ENCODE measurements at regions of chr15 and their contacts with region 1.

Region 1: DNA sequence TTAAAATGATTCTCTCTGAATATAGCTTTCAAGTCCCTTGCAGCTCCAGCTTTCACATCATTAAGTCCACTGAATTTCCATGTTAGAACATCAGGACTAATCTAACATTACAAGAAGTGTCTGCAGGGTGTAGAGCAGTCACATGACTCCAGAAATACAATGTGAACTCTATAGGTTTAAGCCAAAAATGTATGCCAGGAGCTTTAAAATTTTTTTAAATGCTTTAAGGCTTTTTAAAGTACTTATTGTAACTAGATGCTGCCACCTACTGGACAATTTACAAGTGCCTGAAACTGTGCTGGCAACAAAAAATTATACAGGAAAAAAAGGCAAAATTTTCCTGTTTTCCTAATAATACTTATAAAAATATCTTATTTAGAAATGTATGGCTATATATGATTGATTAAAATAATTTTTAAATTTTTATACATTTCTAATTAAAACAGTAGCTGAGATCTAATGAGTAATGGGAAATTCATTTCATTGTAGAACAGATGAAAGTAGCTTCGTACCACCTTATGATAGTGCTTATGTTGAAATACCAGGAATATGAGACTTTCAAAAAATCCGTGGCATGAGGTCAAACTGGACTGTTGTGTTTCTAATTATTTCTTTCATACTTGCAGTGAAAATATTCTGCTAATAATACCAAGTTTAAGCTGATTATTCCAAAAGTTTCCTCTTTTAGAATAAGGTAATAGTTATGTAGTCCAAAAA is 25.7 kb downstream of the FSIP1 start:
- DNase-seq: no peak
- H3K4me3 ChIP-seq: peak overlapping the region in 1 of 2 experiments; percentile 33; a peak in 1 of 4 replicates
- H3K27ac ChIP-seq: no peak overlapping the region
- H3K4me1 ChIP-seq: no peaks in the 10 kb centered on the region; a peak in 1 of 4 replicates
- H3K27me3 ChIP-seq: no peaks in the 10 kb centered on the region
- CTCF ChIP-seq: peak; percentile 81
- EP300 ChIP-seq: no peak
- RAD21 ChIP-seq: peak; percentile 78

Region 2: DNA sequence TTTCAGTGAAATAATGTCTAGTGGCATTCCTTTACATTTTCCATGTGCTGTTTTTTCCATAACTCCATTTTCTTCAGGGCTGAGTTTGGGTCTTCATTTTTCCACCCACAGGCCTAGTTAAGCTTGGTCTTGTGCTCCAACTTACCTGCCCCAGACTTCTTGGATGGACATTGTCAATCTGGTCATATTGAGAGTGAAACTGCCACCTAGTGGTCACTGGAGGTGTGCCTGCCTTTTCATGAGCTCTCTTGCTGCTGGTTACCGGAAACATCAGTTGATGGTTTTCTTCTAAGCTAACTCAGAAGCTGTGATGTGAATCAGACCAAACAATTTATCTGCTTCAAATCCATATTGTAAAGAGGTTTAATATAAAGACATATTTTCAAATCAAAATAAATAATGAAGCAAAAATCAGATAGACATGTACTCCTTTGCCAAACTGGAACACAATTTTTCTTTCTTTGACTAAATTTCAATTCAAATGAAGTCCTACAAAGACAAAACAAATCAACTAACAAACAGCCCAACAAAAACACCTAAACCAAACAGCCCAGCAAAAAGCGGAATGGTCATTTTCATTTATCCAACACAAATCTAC is 1057.2 kb before region 1 on chr15:
- CTCF ChIA-PET with region 1: interaction called, 81 read pairs
- POLR2A ChIA-PET with region 1: no interaction called
- DNase-seq: peak; percentile 39
- H3K4me3 ChIP-seq: peak overlapping the region in 1 of 2 experiments; percentile 5; a peak in 1 of 4 replicates
- H3K27ac ChIP-seq: no peak overlapping the region
- H3K4me1 ChIP-seq: peaks cover 0 to 38% of the 10 kb centered on the region in 2 experiments; a peak in 2 of 4 replicates
- H3K27me3 ChIP-seq: no peaks in the 10 kb centered on the region
- CTCF ChIP-seq: peak; percentile 91
- EP300 ChIP-seq: no peak
- RAD21 ChIP-seq: peak; percentile 66

Region 3: DNA sequence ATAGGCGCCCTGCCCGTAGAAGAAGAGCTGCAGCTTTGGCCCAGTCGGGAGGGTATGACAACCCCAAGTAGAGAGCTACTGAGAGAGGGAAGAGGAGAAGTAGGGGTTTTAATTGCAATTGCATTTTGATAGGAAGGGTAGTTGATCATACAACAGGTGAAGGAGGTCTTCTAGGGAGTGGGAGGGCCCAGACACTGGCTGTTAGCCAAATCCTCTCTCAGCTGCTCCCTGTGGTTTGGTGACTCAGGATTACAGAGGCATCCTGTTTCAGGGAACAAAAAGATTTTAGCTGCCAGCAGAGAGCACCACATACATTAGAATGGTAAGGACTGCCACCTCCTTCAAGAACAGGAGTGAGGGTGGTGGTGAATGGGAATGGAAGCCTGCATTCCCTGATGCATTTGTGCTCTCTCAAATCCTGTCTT is 585.0 kb before region 1 on chr15:
- CTCF ChIA-PET with region 1: interaction called, 20 read pairs
- POLR2A ChIA-PET with region 1: no interaction called
- DNase-seq: peak; percentile 31
- H3K4me3 ChIP-seq: no peak overlapping the region
- H3K27ac ChIP-seq: peak overlapping the region; percentile 58 to 78; a peak in 3 of 4 replicates
- H3K4me1 ChIP-seq: peaks cover 7 to 8% of the 10 kb centered on the region in 2 experiments
- H3K27me3 ChIP-seq: no peaks in the 10 kb centered on the region
- CTCF ChIP-seq: peak; percentile 73
- EP300 ChIP-seq: peak in 1 of 2 experiments; percentile 77; a peak in 1 of 4 replicates
- RAD21 ChIP-seq: peak; percentile 87

Region 4: GRCh38 chr15:39666677-39667076 is 90.3 kb before region 1 on chr15:
- CTCF ChIA-PET with region 1: interaction called, 21 read pairs
- POLR2A ChIA-PET with region 1: no interaction called
- DNase-seq: no peak
- H3K4me3 ChIP-seq: no peak overlapping the region
- H3K27ac ChIP-seq: peak overlapping the region; percentile 53 to 68; a peak in 3 of 4 replicates
- H3K4me1 ChIP-seq: peaks cover 4 to 19% of the 10 kb centered on the region in 2 experiments
- H3K27me3 ChIP-seq: no peaks in the 10 kb centered on the region
- CTCF ChIP-seq: no peak
- EP300 ChIP-seq: no peak
- RAD21 ChIP-seq: no peak

Region 5: DNA sequence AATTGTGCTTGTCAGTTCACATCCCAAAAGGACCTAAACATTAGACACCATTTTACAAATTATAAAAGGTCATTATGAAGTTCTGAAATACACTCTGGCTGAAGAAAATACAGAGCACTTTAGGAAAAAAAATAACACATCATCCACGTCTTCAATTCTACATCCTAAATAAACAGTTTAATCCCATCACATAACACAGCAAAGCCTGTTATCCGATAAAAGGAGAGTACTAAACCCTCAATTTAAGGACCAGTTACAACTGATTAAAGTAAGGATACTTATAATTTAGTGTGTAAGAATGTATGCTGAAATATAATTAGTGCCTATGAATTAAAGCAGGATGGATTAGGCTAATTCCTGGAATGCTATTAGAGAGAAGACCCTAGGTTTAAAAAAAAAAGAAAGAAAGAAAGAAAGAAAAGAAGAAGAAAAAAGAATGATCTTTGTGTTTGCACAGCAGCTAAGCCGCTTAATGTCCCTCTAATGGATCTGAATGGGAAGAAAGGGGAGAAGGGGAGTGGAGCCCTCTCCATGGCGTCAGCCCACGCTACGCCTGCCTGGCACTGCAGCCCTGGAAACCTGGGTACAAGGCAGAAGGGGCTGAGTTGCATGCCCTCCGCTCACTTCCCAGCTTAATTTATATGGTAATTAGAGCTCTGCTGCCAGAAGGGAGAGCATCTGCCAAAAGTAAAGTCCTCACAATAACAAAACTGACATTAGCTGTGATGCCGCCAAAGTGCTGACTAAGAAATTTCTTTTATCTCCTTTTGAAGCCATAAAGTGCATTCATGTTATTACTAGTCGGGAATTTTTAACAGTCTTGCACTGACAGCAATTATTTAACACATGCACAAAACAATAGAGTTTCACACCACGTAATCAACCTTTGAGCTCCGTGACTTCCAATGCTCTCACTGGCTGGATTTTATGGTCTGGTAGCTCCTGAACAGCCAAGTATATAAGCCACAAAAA is 64.3 kb before region 1 on chr15:
- CTCF ChIA-PET with region 1: interaction called, 139 read pairs
- POLR2A ChIA-PET with region 1: no interaction called
- DNase-seq: peak; percentile 7
- H3K4me3 ChIP-seq: no peak overlapping the region
- H3K27ac ChIP-seq: no peak overlapping the region
- H3K4me1 ChIP-seq: peaks cover 2 to 6% of the 10 kb centered on the region in 2 experiments; a peak in 1 of 4 replicates
- H3K27me3 ChIP-seq: no peaks in the 10 kb centered on the region
- CTCF ChIP-seq: no peak
- EP300 ChIP-seq: no peak
- RAD21 ChIP-seq: no peak

Region 6: GRCh38 chr15:39720621-39721611 is 36.0 kb before region 1 on chr15:
- CTCF ChIA-PET with region 1: interaction called, 20 read pairs
- POLR2A ChIA-PET with region 1: no interaction called
- DNase-seq: no peak
- H3K4me3 ChIP-seq: no peak overlapping the region; a peak in 1 of 4 replicates
- H3K27ac ChIP-seq: peak overlapping the region; percentile 86 to 89; a peak in 3 of 4 replicates
- H3K4me1 ChIP-seq: peaks cover 13% of the 10 kb centered on the region in 2 experiments
- H3K27me3 ChIP-seq: no peaks in the 10 kb centered on the region
- CTCF ChIP-seq: no peak
- EP300 ChIP-seq: peak in 1 of 2 experiments; percentile 56; a peak in 2 of 4 replicates
- RAD21 ChIP-seq: no peak

Region 7: DNA sequence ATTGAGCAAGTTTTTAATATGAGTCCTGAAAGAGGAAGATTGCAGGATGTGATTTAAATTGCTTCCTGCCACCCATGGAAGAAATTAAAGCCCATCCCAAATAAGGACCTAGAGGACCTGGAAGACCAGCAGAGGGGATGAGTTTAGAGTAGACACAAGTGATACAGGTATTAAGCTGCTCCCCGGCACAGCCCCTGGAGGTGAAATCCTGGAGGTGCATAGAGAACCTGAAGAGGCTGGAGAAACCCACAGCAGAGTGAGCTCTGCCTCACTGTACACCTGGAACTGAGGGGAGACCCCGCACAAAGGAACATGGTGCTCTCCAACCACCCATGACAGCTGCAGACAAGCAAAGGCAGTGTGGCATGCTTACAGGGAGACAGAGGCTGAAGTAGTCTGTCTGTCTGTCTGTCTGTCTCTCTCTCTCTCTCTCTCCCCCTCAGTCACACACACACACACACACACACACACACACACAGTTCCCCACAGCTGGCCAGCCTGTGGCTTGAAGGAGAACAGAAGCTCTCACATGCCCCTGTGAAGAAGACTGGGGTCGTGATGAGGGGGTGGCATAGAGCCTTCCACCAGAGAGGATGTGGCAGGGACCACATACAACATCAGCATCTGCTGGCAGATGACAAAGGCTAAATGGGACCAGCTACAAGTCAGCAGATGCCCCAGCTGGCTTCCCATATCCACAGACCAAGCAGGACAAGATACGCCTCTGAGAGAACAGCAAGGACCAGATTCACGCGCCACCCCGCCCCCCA is 12.4 kb before region 1 on chr15:
- CTCF ChIA-PET with region 1: interaction called, 41 read pairs
- POLR2A ChIA-PET with region 1: no interaction called
- DNase-seq: no peak
- H3K4me3 ChIP-seq: no peak overlapping the region
- H3K27ac ChIP-seq: no peak overlapping the region
- H3K4me1 ChIP-seq: no peaks in the 10 kb centered on the region; a peak in 1 of 4 replicates
- H3K27me3 ChIP-seq: no peaks in the 10 kb centered on the region
- CTCF ChIP-seq: no peak
- EP300 ChIP-seq: no peak
- RAD21 ChIP-seq: no peak

Region 8: DNA sequence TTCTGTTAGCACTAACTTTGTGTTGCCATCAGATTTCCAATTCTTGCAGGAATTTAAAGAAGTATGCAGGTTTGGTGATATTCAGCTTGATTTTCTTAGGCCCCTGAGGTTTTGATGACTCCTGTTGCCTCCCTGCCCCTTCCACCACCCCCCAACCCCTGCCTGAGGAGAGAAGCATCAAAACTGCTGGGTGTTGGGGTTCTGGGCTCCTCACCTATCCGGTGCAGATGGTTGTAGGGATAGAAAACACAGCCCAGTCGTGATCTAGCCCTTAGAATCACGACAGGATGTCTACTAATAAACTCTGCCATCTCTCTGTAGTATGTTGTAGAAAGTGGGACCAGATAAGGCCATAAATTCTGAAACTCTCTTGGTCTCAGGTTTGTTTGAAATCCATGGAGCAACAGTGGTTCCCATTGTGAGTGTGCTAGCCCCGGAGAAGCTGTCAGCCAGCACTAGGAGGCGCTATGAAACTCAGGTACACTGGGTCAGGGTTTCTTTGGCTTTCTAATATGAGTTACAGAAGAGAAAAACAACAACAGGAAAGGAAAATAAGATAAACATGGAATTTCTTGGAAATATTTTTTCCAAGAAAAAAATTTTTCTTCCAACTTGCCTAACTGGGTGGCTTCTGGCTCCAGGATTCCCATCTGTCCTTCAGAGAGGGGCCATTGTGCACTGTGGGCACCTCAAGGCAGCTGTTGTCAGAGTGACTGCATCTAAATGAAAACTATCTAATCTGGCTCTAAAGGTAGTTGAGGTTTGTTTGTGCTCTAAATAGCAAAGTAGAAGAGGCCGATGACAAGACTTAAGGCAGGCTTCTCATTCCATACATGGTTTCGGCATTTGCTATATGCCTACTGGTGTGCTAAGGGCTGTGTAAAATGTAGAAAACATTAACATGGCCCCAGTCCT is 273.3 kb after region 1 on chr15:
- CTCF ChIA-PET with region 1: no interaction called
- POLR2A ChIA-PET with region 1: no interaction called
- DNase-seq: no peak
- H3K4me3 ChIP-seq: no peak overlapping the region
- H3K27ac ChIP-seq: no peak overlapping the region
- H3K4me1 ChIP-seq: no peaks in the 10 kb centered on the region
- H3K27me3 ChIP-seq: no peaks in the 10 kb centered on the region
- CTCF ChIP-seq: peak; percentile 68
- EP300 ChIP-seq: no peak
- RAD21 ChIP-seq: peak; percentile 41

Measured in SK-N-SH (cell line).